ENCODE measurements at regions of chr1 and their contacts with region 1.

Region 1: GRCh38 chr1:161032409-161032808 is 6.4 kb downstream of the TSTD1 start:
- DNase-seq: no peak
- H3K4me3 ChIP-seq: no peak overlapping the region
- H3K27ac ChIP-seq: no peak overlapping the region
- H3K4me1 ChIP-seq: peaks cover 0 to 11% (median 0%) of the 10 kb centered on the region in 4 experiments
- H3K27me3 ChIP-seq: no peaks in the 10 kb centered on the region

Region 2: DNA sequence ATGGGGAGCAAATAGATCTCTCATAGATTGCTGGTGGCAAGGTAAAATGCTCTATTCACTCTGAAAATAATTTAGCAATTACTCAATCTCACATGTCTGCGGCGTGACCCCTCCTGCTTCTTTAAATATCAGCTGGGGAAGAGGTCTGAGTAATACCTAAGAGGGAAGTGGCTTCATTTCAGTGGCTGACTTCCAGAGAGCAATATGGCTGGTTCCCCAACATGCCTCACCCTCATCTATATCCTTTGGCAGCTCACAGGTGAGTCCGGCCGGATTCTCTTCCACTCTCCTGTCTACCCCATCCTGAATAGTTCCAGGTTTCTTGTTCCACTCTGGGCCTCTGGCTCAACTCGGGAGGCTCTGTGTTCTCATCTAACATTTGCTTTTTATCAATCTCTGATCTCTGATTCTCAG is 293.3 kb before region 1 on chr1 and contains the start of gene SLAMF7:
- CTCF ChIA-PET with region 1: no interaction called
- POLR2A ChIA-PET with region 1: no interaction called
- DNase-seq: peak in 2 of 3 donors; percentile 53 to 58
- H3K4me3 ChIP-seq: no peak within 1 kb of the TSS
- H3K27ac ChIP-seq: no peak within 1 kb of the TSS
- H3K4me1 ChIP-seq: peaks cover 0 to 7% (median 0%) of the 10 kb centered on the region in 4 experiments
- H3K27me3 ChIP-seq: no peaks in the 10 kb centered on the region

Region 3: GRCh38 chr1:161045750-161046571 is 13.6 kb after region 1 on chr1 and contains the start of gene USF1:
- CTCF ChIA-PET with region 1: interaction called, 13 read pairs
- POLR2A ChIA-PET with region 1: no interaction called
- DNase-seq: peak; percentile 97 to 98 (median 98)
- H3K4me3 ChIP-seq: peak within 1 kb of the TSS; percentile 75 to 97 (median 91)
- H3K27ac ChIP-seq: peak within 1 kb of the TSS; percentile 95 to 97
- H3K4me1 ChIP-seq: peaks cover 8 to 31% (median 20%) of the 10 kb centered on the region in 4 experiments
- H3K27me3 ChIP-seq: no peaks in the 10 kb centered on the region